ENCODE measurements at regions of chr2 and their contacts with region 1.

Region 1: DNA sequence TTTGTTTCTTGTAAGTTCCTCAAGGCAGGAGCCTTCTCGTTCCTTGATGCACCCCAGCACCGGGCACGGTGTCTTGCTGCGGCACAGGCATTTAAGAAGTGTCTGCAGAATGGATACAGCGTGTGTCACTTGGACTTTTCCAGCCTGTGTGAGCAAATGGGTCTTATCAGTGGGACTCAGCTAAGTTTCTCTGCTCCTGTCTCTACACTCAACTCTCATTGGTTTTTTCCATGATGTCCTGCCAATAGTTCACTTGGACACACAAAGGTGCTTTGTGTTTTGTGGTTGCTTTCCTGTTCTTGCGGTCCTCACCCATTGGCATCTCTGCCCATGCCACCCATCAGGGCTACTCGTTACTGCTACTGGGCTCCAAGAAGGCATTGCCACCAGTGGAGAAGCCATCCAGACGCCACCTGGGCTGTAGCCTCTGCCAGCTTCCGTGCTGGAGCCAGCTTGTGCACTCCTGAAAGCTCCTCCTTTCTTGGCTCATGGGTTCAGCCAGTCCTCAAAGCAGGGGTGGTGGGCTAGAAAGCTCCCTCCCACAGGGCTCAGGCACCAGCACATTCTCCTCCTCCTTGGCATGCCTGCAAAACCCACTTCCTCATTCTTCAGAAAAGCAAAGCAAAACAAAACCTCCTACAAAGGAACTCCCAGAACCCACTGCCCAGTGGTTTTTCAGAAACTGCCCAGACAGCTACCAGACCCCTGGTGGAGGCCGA is 41.4 kb downstream of the IL1R2 start:
- DNase-seq: peak; percentile 80
- ATAC-seq: peak; percentile 53
- H3K4me3 ChIP-seq: peak overlapping the region; percentile 8 to 59 (median 14); a peak in 5 of 6 replicates
- H3K27ac ChIP-seq: peak overlapping the region; percentile 73
- H3K4me1 ChIP-seq: peaks cover 83% of the 10 kb centered on the region
- H3K27me3 ChIP-seq: no peaks in the 10 kb centered on the region
- CTCF ChIP-seq: peak; percentile 11; the same call in 1 of the 2 replicates
- EP300 ChIP-seq: peak in 1 of 2 experiments; percentile 50; a peak in 2 of 4 replicates
- POLR2A ChIP-seq: peak; percentile 30 to 62; a peak in 3 of 4 replicates
- RAD21 ChIP-seq: no peak

Region 2: GRCh38 chr2:102046135-102046986 is 13.2 kb after region 1 on chr2:
- CTCF ChIA-PET with region 1: no interaction called
- POLR2A ChIA-PET with region 1: interaction called, 73 read pairs
- in situ Hi-C with region 1: no loop called
- intact Hi-C with region 1: loop called (anchors 2 kb)
- DNase-seq: peak; percentile 98
- ATAC-seq: peak; percentile 98
- H3K4me3 ChIP-seq: peak overlapping the region in 1 of 3 experiments; percentile 2; a peak in 1 of 6 replicates
- H3K27ac ChIP-seq: peak overlapping the region; percentile 83
- H3K4me1 ChIP-seq: peaks cover 92% of the 10 kb centered on the region
- H3K27me3 ChIP-seq: no peaks in the 10 kb centered on the region
- CTCF ChIP-seq: peak; percentile 50
- EP300 ChIP-seq: peak in 1 of 2 experiments; percentile 95; a peak in 2 of 4 replicates
- POLR2A ChIP-seq: peak; percentile 42 to 74; a peak in 2 of 4 replicates
- RAD21 ChIP-seq: peak; percentile 65; the same call in 1 of the 2 replicates

Region 3: DNA sequence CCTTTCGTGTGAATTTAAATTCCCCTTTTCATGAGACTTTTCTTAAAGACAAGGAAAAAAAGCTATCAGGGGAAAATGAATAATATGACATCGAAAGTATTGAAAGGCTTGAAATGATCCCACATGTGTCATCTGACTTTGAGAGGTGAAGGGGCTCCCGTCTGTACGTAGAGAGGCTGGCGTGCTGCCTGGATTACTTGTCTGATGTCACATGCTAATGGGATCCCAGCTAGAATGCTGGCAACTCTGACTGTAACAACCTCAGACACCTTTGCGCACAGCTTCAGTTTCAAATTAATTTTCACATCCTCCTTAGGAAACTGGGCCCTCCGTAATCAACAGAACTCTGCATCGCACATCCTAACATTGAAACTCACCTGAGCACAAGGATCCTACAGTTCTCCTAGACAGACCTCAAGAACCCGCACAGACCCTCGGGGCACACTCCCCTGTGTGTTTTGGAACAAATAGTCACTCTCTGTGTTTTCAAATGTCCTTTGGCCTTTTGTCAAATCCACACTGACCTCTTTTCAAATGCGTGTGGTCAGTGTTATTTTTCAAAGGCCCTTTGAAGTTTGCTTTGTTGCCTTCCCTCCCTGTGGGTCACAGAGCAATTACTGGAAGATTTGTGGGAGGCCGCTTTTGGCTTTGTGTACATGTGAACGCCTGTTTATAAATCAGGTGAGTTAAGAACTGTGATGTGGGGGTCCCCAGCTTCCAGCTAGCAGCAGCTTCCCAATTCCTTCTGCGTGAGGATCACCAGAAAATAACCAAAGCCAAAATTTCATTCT is 24.5 kb after region 1 on chr2:
- CTCF ChIA-PET with region 1: no interaction called
- POLR2A ChIA-PET with region 1: interaction called, 35 read pairs
- in situ Hi-C with region 1: no loop called
- intact Hi-C with region 1: no loop called
- DNase-seq: peak; percentile 98
- ATAC-seq: peak; percentile 88
- H3K4me3 ChIP-seq: peak overlapping the region in 1 of 3 experiments; percentile 39; a peak in 1 of 6 replicates
- H3K27ac ChIP-seq: peak overlapping the region; percentile 89
- H3K4me1 ChIP-seq: peaks cover 89% of the 10 kb centered on the region
- H3K27me3 ChIP-seq: no peaks in the 10 kb centered on the region
- CTCF ChIP-seq: no peak
- EP300 ChIP-seq: peak; percentile 76 to 100; a peak in 3 of 4 replicates
- POLR2A ChIP-seq: no peak
- RAD21 ChIP-seq: peak; percentile 14; the same call in 1 of the 2 replicates

Region 4: DNA sequence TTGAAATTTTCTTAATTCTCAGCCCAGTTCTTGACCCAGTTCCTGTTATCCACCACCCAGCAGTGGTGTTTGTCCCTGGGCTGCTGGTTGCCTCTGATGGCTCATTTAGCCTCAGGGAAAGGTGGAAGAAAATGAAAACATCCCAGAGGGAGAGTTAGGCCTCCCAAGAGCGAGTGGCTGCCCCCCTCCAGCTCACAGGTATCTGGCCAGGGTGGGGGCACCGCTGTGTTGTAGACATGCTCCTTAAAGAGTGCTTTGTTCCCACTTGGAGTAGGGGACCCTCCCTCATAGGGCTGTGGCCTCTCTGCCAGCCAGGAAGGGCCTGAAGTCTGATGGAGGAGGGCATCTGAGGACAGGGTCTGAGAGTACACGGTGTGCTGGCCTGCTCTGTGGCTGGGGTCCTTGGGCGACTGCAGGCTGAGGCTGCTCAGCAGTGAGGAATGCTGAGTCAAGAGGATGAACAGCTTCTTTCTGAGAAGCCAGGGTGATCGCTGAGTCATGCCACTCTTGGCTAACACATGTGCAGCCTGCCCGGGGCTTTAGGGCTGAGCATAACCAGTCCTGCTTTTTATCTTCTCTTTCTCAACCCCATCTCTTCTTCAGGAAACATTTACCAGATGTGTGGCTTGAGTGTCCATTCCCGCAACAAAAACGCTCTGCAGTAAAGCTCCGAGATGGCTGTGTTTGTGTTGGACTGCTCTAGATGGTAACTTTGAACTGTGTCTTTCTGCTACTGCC is 30.9 kb after region 1 on chr2:
- CTCF ChIA-PET with region 1: no interaction called
- POLR2A ChIA-PET with region 1: interaction called, 35 read pairs
- in situ Hi-C with region 1: no loop called
- intact Hi-C with region 1: no loop called
- DNase-seq: peak; percentile 88
- ATAC-seq: peak; percentile 84
- H3K4me3 ChIP-seq: peak overlapping the region in 1 of 3 experiments; percentile 7; a peak in 2 of 6 replicates
- H3K27ac ChIP-seq: peak overlapping the region; percentile 71
- H3K4me1 ChIP-seq: peaks cover 82% of the 10 kb centered on the region
- H3K27me3 ChIP-seq: no peaks in the 10 kb centered on the region
- CTCF ChIP-seq: no peak
- EP300 ChIP-seq: peak in 1 of 2 experiments; percentile 67; a peak in 1 of 4 replicates
- POLR2A ChIP-seq: no peak; a peak in 1 of 4 replicates
- RAD21 ChIP-seq: no peak

Region 5: DNA sequence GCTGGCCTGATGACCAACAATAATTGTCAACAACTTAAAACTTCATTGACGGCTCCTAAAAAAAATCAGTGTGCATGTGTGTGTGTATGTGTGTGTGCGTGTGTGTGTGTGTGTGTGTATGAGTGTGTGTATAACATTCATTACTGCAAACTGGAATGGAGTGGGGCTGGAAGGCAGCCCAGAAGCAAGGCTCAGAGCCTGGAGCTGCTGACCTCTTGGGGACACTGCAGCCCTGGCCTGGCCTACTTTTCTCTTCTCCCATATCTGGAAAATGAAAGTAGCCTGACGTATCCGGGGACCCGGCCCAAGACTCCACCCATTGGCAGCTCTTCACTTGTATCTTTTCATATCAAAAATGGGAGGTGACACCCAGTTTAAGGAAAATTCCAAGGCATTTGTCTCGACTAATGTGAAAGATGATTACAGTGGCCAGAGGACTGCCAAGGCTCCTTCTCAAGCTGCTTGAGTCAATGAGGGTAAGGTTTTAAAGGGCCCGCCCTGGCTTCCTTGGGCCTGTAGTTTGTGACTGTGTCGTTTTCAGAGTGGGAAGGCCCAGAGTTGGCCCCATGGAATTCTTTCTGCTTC is 37.0 kb after region 1 on chr2:
- CTCF ChIA-PET with region 1: no interaction called
- POLR2A ChIA-PET with region 1: interaction called, 28 read pairs
- in situ Hi-C with region 1: no loop called
- intact Hi-C with region 1: no loop called
- DNase-seq: peak; percentile 79
- ATAC-seq: peak; percentile 96
- H3K4me3 ChIP-seq: peak overlapping the region; percentile 2 to 51 (median 39); a peak in 5 of 6 replicates
- H3K27ac ChIP-seq: peak overlapping the region; percentile 83
- H3K4me1 ChIP-seq: peaks cover 77% of the 10 kb centered on the region
- H3K27me3 ChIP-seq: no peaks in the 10 kb centered on the region
- CTCF ChIP-seq: peak; percentile 80
- EP300 ChIP-seq: 0 out of 4 replicates have a peak, but pooled peaks of 1 of the 2 experiments have one; percentile 4
- POLR2A ChIP-seq: no peak
- RAD21 ChIP-seq: peak; percentile 73

Region 6: GRCh38 chr2:102103992-102104871 is 71.0 kb after region 1 on chr2:
- CTCF ChIA-PET with region 1: no interaction called
- POLR2A ChIA-PET with region 1: interaction called, 22 read pairs
- in situ Hi-C with region 1: loop called (anchors 10 kb)
- intact Hi-C with region 1: loop called (anchors 2 kb)
- DNase-seq: no peak
- ATAC-seq: no peak
- H3K4me3 ChIP-seq: no peak overlapping the region
- H3K27ac ChIP-seq: peak overlapping the region; percentile 26
- H3K4me1 ChIP-seq: peaks cover 98% of the 10 kb centered on the region
- H3K27me3 ChIP-seq: no peaks in the 10 kb centered on the region
- CTCF ChIP-seq: no peak
- EP300 ChIP-seq: no peak
- POLR2A ChIP-seq: no peak
- RAD21 ChIP-seq: no peak